Dendritic cell treated with granulocyte-macrophage colony-stimulating factor and Interleukin-4, amounts not matched to agents 40 ng/mL and 50 ng/mL, for 4 days (primary cell): ENCODE measurements at regions of chr19 and their contacts with region 1.

Region 1: GRCh38 chr19:44657211-44657921 is 13.7 kb downstream of the PVR start:
- H3K4me3 Mint-ChIP-seq: no peak overlapping the region
- H3K27ac Mint-ChIP-seq: no peak overlapping the region
- H3K4me1 Mint-ChIP-seq: peaks cover 28% of the 10 kb centered on the region
- H3K27me3 Mint-ChIP-seq: no peaks in the 10 kb centered on the region

Region 2: GRCh38 chr19:44570984-44571684 is 86.2 kb before region 1 on chr19:
- intact Hi-C with region 1: loop called (anchors 1 kb)
- H3K4me3 Mint-ChIP-seq: no peak overlapping the region
- H3K27ac Mint-ChIP-seq: no peak overlapping the region
- H3K4me1 Mint-ChIP-seq: peaks cover 39% of the 10 kb centered on the region
- H3K27me3 Mint-ChIP-seq: peaks cover 16% of the 10 kb centered on the region

Region 3: DNA sequence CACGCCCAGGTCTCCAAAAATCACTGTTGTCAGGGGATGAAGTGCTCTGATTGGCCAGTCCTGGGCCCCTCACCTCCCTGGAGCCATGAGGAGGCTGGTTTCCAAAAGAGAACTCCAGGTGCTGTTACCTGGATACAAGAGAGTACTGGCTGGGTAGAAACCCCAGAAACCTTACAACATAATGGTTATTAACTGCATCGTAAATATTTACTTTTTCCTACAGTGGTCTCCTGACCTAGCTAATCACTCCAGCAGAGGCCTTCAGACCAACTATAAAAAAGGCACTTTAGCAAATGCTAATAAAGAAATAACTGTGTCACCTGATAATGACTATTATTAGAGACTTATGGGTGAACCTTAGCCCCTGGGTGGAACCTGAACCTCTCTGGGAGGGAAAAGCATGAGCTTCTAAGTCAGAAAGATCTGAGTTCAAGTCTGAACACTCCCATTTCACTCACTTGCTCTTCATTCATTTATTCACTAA is 45.5 kb before region 1 on chr19:
- intact Hi-C with region 1: loop called (anchors 5 kb)
- H3K4me3 Mint-ChIP-seq: no peak overlapping the region
- H3K27ac Mint-ChIP-seq: no peak overlapping the region
- H3K4me1 Mint-ChIP-seq: peaks cover 31% of the 10 kb centered on the region
- H3K27me3 Mint-ChIP-seq: no peaks in the 10 kb centered on the region

Region 4: DNA sequence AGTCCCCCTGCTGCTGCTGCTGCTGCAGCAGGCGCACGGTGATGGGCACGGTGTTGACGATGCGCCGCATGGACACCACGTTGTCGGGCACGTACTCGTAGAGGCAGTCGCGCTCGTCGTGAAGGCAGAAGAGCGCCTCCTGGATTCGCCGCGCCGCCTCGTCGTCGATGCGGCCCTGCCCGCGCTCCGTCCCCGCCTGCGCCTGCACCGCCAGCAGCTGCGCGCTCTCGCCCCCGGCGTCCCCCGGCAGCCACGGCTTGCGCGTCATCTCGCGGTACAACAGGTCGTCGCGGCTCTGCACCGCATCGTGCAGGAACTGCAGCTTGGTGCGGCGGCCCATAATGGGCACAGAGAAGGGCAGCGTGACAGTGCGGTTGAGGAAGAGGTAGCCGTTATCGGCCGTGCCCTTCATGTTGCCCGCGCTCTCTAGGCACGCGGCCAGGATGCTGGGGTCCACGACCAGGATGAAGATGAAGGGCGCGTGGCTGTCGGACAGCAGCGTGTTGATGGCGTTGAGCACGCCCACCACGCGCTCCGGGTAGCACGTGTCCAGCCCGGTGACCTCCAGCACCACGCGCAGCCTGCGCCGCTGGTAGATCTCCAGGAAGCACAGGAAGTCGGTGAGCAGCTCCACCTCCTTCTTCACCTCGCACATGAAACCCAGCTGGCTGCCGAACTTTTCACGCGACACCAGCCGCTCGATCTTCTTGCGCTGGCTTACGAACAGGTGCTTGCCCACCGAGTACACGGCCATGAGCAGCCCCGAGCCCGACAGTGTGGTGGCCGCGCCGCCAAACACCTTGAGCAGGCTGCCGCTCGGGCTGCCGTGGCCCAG is 495.4 kb after region 1 on chr19:
- intact Hi-C with region 1: no loop called
- H3K4me3 Mint-ChIP-seq: peak overlapping the region; percentile 43
- H3K27ac Mint-ChIP-seq: no peak overlapping the region
- H3K4me1 Mint-ChIP-seq: peaks cover 42% of the 10 kb centered on the region
- H3K27me3 Mint-ChIP-seq: peaks cover 68% of the 10 kb centered on the region